Activated T-helper 2 cell treated with anti-CD3 and anti-CD28 coated beads, Interferon-gamma antibody, Interleukin-2, Interleukin-4, amounts not matched to agents 10 μg/mL and 5 μg/mL and 100 μg/mL, durations not matched to agents 14 hours and 24 hours and 36 hours (primary cell): ENCODE measurements at regions of chr16 and their contacts with region 1.

Region 1: GRCh38 chr16:2926650-2927646 is 15.2 kb downstream of the FLYWCH1 start:
- DNase-seq: peak; percentile 83
- H3K4me3 Mint-ChIP-seq: no peak overlapping the region
- H3K27ac Mint-ChIP-seq: no peak overlapping the region
- H3K4me1 Mint-ChIP-seq: peaks cover 14% of the 10 kb centered on the region
- H3K27me3 Mint-ChIP-seq: no peaks in the 10 kb centered on the region

Region 2: DNA sequence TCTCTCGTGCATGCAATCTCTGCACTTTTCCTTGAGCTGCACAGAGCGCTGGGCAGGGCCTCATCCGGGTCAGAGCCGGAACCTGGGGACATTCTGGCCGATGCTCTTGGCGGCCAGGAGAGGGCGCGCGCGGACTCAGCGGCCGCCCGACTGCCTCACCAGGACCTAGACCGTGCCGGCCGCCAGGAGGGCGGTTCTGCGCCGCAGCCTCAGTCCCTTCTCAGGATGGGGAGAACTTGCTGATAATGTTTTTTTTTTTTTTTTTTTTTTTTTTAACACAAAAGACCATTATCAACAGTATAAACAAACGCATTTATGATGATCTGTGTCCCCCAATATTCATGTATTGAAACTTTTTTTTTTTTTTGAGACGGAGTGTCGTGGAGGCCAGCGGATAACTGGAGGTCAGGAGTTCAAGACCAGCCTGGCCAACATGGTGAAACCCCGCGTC is 52.0 kb before region 1 on chr16:
- intact Hi-C with region 1: loop called (anchors 2 kb)
- DNase-seq: peak; percentile 61
- H3K4me3 Mint-ChIP-seq: no peak overlapping the region
- H3K27ac Mint-ChIP-seq: no peak overlapping the region
- H3K4me1 Mint-ChIP-seq: peaks cover 2% of the 10 kb centered on the region
- H3K27me3 Mint-ChIP-seq: peaks cover 3% of the 10 kb centered on the region

Region 3: DNA sequence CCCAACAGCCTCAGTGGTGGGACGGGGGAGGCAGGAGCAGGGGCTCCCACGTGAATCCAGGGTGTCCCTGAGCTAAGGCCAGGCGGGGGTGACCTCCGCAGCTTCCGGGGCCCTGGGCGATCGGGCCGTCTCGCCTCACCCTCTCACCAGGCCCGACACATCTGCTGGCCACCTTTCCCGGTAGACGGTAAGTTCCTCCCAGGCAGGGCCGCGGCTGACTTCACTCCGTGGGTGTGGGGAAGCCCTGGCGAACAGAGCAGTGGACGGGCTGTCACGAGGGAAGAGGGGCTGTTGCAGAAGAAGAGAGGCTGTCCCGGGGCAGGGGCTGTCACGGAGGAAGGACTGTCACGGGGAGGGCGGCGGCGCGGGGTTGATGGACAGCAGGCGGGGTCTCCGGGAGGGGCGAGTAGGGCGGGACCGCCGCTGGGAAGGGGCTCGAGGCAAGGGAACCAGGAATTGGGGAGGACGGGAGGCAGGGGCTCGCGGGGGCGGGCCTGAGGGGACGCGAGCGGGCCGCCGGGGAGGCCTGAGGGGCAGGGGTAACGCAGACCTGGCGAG is 52.8 kb after region 1 on chr16:
- intact Hi-C with region 1: no loop called
- DNase-seq: peak; percentile 38
- H3K4me3 Mint-ChIP-seq: peak overlapping the region; percentile 90
- H3K27ac Mint-ChIP-seq: peak overlapping the region; percentile 88
- H3K4me1 Mint-ChIP-seq: peaks cover 9% of the 10 kb centered on the region
- H3K27me3 Mint-ChIP-seq: no peaks in the 10 kb centered on the region

Region 4: DNA sequence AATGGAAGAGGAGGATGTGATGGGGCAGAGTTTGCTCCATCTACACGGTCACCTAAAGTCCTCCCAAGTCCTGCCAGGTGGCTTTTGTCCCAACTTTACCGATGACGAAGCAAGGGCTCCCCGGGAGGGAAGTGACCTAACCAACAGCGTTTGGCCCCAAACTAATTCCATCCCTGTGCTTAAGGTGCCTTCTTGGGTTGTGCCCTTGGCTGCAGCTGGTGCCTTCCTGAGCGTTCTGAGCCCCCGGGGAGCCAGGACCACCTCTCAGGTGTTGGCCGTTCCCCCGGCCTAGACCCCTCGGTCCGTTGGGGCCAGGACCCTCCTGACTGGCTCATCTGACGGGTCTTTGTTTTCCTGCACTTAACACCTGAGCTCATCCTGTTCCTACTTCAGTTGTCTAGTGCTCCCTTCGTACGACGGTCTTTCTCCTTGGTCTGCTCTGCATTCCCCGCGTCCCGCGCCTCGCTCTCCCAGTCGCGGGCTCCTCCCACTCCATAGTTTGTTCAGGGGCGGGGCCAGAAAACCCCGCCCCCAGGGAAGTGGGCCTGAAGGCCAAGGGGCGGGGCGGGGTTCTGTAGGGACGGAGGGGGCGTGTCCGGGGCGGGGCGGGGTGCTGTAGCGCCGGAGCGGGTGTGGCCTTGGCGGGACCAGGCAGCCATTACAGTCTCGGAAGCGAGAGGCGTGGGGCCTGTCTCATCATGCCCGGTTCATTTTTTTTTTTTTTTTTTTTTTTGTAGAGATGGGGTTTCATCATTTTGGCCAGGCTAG is 173.0 kb after region 1 on chr16:
- intact Hi-C with region 1: no loop called
- DNase-seq: peak; percentile 86
- H3K4me3 Mint-ChIP-seq: peak overlapping the region; percentile 69
- H3K27ac Mint-ChIP-seq: peak overlapping the region; percentile 47
- H3K4me1 Mint-ChIP-seq: peaks cover 29% of the 10 kb centered on the region
- H3K27me3 Mint-ChIP-seq: peaks cover 4% of the 10 kb centered on the region

Region 5: DNA sequence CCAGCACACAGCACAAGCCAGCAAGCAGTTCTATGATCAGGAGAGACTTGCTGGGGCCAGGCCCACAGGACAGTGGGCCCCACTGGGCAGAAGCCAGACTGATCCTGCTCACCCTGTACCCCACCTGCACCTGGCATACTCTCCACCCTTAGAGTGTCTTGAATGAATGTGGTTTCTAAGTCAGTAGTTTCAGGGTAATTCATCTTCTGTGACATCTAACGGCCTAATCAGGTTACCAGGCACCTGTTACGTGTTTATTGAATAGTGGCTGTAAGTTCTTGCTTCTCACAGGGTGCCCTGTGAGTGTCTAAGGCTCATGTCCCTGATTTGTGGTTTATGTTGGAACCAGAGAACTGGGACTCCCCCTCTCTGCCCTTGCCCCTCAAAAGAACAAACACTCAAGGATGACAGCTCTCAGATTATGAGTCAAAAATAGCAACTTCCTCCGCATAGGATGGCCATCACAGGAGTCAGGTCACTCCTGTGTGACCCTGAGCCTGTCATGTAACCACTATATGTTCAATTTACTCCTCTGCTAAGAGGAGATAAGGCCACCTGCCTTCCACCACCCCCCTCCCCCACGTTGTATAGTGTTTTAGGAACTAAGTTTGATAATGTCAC is 421.7 kb after region 1 on chr16:
- intact Hi-C with region 1: no loop called
- DNase-seq: no peak
- H3K4me3 Mint-ChIP-seq: no peak overlapping the region
- H3K27ac Mint-ChIP-seq: no peak overlapping the region
- H3K4me1 Mint-ChIP-seq: no peaks in the 10 kb centered on the region
- H3K27me3 Mint-ChIP-seq: no peaks in the 10 kb centered on the region